Activated naive CD8-positive, alpha-beta T cell treated with anti-CD3 and anti-CD28 coated beads, Interleukin-2, amount 10 ng/mL, durations not matched to agents 7 days and 5 days (primary cell): ENCODE measurements at regions of chr20 and their contacts with region 1.

Region 1: DNA sequence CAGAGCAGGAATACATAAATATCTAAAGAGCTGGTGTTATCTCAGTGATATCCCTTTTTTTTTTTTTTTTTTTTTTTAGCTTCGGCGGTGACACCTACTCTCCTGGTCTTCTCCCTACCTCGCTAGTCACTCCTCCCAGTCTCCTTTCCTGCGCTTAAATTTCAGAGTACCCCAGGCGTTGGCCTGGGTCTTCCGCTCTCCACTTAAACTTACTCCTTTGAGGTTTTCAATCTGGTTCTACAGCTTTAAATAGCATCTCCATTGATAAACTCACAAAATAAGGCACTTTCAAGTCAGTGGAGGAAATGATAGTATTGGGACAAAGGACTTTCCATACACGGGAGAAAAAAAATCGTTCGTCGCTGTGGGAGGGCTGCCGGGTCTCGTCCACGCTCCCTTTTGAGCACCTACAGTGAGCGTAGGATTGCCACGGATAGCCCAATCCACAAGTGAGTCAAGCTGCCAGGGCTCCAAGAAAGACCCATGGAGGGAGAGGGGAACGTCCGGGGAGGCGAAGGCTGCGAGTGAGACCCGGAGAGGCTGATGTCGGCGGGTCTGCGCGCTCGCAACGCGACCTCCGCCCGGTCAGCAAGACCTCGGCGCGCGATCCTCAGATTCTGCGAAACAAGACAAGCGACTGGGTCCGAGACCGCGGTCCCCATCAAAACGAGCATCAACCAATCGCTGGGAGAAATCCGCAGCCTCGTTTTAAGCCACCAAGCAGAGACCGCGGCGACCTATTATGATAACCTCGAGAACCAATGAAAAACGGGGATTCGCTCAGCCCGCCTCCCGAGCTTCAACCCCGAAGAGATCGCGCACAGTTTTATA is 672 bp upstream of the SRSF6 start:
- DNase-seq: peak; percentile 79
- ATAC-seq: peak; percentile 82
- H3K4me3 Mint-ChIP-seq: peak overlapping the region; percentile 98
- H3K27ac Mint-ChIP-seq: peak overlapping the region; percentile 99
- H3K4me1 Mint-ChIP-seq: peaks cover 27% of the 10 kb centered on the region
- H3K27me3 Mint-ChIP-seq: peaks cover 10% of the 10 kb centered on the region

Region 2: GRCh38 chr20:43205699-43206098 is 251.3 kb before region 1 on chr20:
- POLR2A ChIA-PET with region 1: no interaction called
- DNase-seq: no peak
- ATAC-seq: no peak
- H3K4me3 Mint-ChIP-seq: no peak overlapping the region
- H3K27ac Mint-ChIP-seq: no peak overlapping the region
- H3K4me1 Mint-ChIP-seq: no peaks in the 10 kb centered on the region
- H3K27me3 Mint-ChIP-seq: no peaks in the 10 kb centered on the region

Region 3: DNA sequence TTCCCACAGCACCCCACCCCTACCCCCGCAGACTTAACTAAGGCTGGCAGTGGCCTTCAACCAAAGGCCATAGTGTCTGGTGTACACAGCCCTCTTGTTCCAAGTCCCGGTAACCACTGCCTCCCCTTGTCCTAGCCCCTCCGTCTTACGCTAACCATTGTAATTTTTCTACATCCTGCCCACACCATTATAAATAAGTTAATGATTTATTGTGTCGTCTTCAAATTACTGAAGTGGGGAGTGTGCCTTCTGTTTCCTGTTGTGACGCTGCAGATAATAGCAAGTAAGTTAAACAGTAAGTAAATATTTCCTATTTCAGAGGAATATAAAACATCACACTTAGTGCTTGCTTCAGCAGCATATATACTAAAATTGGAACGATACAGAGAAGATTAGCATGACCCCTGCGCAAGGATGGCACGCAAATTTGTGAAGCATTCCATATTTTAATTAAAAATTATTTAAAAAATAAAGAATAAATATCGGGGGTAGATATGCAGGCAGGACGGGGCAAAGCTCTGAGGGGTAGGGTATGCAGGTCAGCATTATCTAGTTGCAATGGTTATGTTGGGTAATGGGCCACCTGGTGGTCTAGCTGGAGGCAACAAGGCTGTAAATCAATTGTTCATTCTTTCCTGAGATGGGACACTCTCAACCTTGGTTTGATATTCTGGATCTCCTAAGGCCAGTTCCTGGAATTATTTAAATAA is 15.8 kb after region 1 on chr20:
- POLR2A ChIA-PET with region 1: interaction called, 10 read pairs
- DNase-seq: no peak
- ATAC-seq: no peak
- H3K4me3 Mint-ChIP-seq: no peak overlapping the region
- H3K27ac Mint-ChIP-seq: no peak overlapping the region
- H3K4me1 Mint-ChIP-seq: peaks cover 2% of the 10 kb centered on the region
- H3K27me3 Mint-ChIP-seq: peaks cover 7% of the 10 kb centered on the region

Region 4: GRCh38 chr20:43514062-43514999 is 57.3 kb after region 1 on chr20:
- POLR2A ChIA-PET with region 1: interaction called, 26 read pairs
- DNase-seq: peak; percentile 86
- ATAC-seq: peak; percentile 91
- H3K4me3 Mint-ChIP-seq: peak overlapping the region; percentile 91
- H3K27ac Mint-ChIP-seq: peak overlapping the region; percentile 87
- H3K4me1 Mint-ChIP-seq: peaks cover 3% of the 10 kb centered on the region
- H3K27me3 Mint-ChIP-seq: peaks cover 5% of the 10 kb centered on the region

Region 5: GRCh38 chr20:43563429-43563828 is 106.4 kb after region 1 on chr20:
- POLR2A ChIA-PET with region 1: no interaction called
- DNase-seq: no peak
- ATAC-seq: no peak
- H3K4me3 Mint-ChIP-seq: no peak overlapping the region
- H3K27ac Mint-ChIP-seq: no peak overlapping the region
- H3K4me1 Mint-ChIP-seq: no peaks in the 10 kb centered on the region
- H3K27me3 Mint-ChIP-seq: no peaks in the 10 kb centered on the region

Region 6: GRCh38 chr20:43590392-43591323 is 133.6 kb after region 1 on chr20 and contains the start of gene IFT52:
- POLR2A ChIA-PET with region 1: interaction called, 13 read pairs
- DNase-seq: peak; percentile 87
- ATAC-seq: peak; percentile 98
- H3K4me3 Mint-ChIP-seq: peak within 1 kb of the TSS; percentile 82
- H3K27ac Mint-ChIP-seq: peak within 1 kb of the TSS; percentile 92
- H3K4me1 Mint-ChIP-seq: peaks cover 10% of the 10 kb centered on the region
- H3K27me3 Mint-ChIP-seq: peaks cover under 1% of the 10 kb centered on the region
- total RNA-seq, gene IFT52: 17.4 to 17.8 TPM